Ascending aorta (tissue), 2 donors: ENCODE measurements at regions of chr13 and their contacts with region 1.

Region 1: DNA sequence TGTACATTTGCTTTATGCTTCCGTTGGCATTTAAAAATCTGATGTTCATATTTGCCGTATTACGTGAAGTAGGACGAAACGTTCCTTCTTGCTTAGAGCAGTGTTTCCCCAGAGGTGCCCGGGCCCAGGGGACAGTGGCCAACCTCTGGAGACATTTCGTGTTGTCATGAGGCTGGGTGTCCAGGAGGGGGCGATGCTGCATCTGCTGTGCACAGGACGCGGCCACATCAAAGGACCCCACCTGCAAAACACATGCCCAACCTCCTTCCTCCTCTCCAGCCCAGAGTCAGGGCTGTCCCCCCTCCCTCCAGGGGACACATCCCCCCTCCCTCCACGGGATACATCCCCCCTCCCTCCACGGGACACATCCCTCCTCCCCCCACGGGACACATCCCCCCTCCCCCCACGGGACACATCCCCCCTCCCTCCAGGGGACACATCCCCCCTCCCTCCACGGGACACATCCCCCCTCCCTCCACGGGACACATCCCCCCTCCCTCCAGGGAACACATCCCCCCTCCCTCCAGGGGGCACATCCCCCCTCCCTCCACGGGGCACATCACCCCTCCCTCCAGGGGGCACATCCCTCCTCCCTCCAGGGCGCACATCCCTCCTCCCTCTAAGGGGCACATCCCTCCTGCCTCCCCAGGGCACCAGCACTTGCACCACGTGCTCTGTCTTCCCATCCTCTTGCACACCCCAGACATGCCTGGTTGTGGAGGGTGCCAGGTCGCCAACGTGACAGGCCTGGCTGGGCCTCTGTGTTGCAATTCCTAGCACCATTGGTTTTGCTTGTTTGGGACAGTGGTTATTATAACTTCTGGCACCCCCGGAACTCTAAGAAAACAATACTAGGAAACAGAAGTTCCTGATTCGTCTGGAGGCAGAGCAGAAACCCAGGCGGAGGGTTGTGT is 46.7 kb downstream of the GAS6 start:
- DNase-seq: peak; percentile 76 to 95
- H3K4me3 ChIP-seq: peak overlapping the region in 1 of 2 donors; percentile 13
- H3K27ac ChIP-seq: peak overlapping the region; percentile 72 to 77
- H3K4me1 ChIP-seq: peaks cover 21 to 39% of the 10 kb centered on the region in 2 donors
- H3K27me3 ChIP-seq: no peaks in the 10 kb centered on the region
- CTCF ChIP-seq: peak; percentile 81 to 91 (median 83)

Region 2: GRCh38 chr13:113837554-113838355 is 20.6 kb after region 1 on chr13:
- intact Hi-C with region 1: loop called (anchors 1 kb)
- DNase-seq: peak; percentile 86 to 97
- H3K4me3 ChIP-seq: peak overlapping the region; percentile 14 to 29
- H3K27ac ChIP-seq: peak overlapping the region; percentile 86 to 89
- H3K4me1 ChIP-seq: peaks cover 26 to 42% of the 10 kb centered on the region in 2 donors
- H3K27me3 ChIP-seq: no peaks in the 10 kb centered on the region
- CTCF ChIP-seq: peak in 1 of 3 experiments; percentile 5

Region 3: GRCh38 chr13:113904411-113904810 is 87.2 kb after region 1 on chr13:
- intact Hi-C with region 1: loop called (anchors 2 kb)
- DNase-seq: peak in 1 of 2 donors; percentile 72
- H3K4me3 ChIP-seq: no peak overlapping the region
- H3K27ac ChIP-seq: peak overlapping the region; percentile 83 to 93
- H3K4me1 ChIP-seq: peaks cover 7 to 36% of the 10 kb centered on the region in 2 donors
- H3K27me3 ChIP-seq: no peaks in the 10 kb centered on the region
- CTCF ChIP-seq: peak; percentile 27 to 57 (median 51)

Region 4: GRCh38 chr13:113951246-113951999 is 134.2 kb after region 1 on chr13:
- intact Hi-C with region 1: loop called (anchors 1 kb)
- DNase-seq: peak; percentile 30 to 92
- H3K4me3 ChIP-seq: peak overlapping the region in 1 of 2 donors; percentile 41
- H3K27ac ChIP-seq: no peak overlapping the region
- H3K4me1 ChIP-seq: peaks cover 3 to 8% of the 10 kb centered on the region in 2 donors
- H3K27me3 ChIP-seq: no peaks in the 10 kb centered on the region
- CTCF ChIP-seq: peak; percentile 89 to 93 (median 91)

Region 5: GRCh38 chr13:114226699-114227323 is 409.6 kb after region 1 on chr13:
- intact Hi-C with region 1: loop called (anchors 5 kb)
- DNase-seq: peak; percentile 33 to 93
- H3K4me3 ChIP-seq: no peak overlapping the region
- H3K27ac ChIP-seq: no peak overlapping the region
- H3K4me1 ChIP-seq: no peaks in the 10 kb centered on the region
- H3K27me3 ChIP-seq: no peaks in the 10 kb centered on the region
- CTCF ChIP-seq: peak; percentile 98